CD8-positive, alpha-beta memory T cell (primary cell): ENCODE measurements at regions of chr3 and their contacts with region 1.

Region 1: GRCh38 chr3:183635431-183636220 is at the start of gene KLHL24:
- DNase-seq: peak; percentile 83 to 93 (median 87)
- H3K4me3 ChIP-seq: peak within 1 kb of the TSS; percentile 94
- H3K4me3 Mint-ChIP-seq: peak within 1 kb of the TSS; percentile 94 to 100 (median 95)
- H3K27ac ChIP-seq: peak within 1 kb of the TSS; percentile 96
- H3K27ac Mint-ChIP-seq: peak within 1 kb of the TSS; percentile 92 to 98 (median 97)
- H3K4me1 ChIP-seq: peaks cover 29% of the 10 kb centered on the region
- H3K4me1 Mint-ChIP-seq: peaks cover 23 to 40% (median 36%) of the 10 kb centered on the region in 3 donors
- H3K27me3 ChIP-seq: no peaks in the 10 kb centered on the region
- H3K27me3 Mint-ChIP-seq: no peaks in the 10 kb centered on the region
- total RNA-seq, gene KLHL24: 13.4 to 16.9 TPM

Region 2: GRCh38 chr3:183285828-183286457 is 349.7 kb before region 1 on chr3:
- CTCF ChIA-PET with region 1: no interaction called
- POLR2A ChIA-PET with region 1: no interaction called
- DNase-seq: peak; percentile 80 to 96 (median 89)
- H3K4me3 ChIP-seq: no peak overlapping the region
- H3K4me3 Mint-ChIP-seq: peak overlapping the region; percentile 24 to 83 (median 60)
- H3K27ac ChIP-seq: peak overlapping the region; percentile 49
- H3K27ac Mint-ChIP-seq: peak overlapping the region; percentile 93 to 98 (median 98)
- H3K4me1 ChIP-seq: peaks cover 16% of the 10 kb centered on the region
- H3K4me1 Mint-ChIP-seq: peaks cover 25 to 27% (median 27%) of the 10 kb centered on the region in 3 donors
- H3K27me3 ChIP-seq: no peaks in the 10 kb centered on the region
- H3K27me3 Mint-ChIP-seq: peaks cover 0 to 3% of the 10 kb centered on the region in 2 donors

Region 3: DNA sequence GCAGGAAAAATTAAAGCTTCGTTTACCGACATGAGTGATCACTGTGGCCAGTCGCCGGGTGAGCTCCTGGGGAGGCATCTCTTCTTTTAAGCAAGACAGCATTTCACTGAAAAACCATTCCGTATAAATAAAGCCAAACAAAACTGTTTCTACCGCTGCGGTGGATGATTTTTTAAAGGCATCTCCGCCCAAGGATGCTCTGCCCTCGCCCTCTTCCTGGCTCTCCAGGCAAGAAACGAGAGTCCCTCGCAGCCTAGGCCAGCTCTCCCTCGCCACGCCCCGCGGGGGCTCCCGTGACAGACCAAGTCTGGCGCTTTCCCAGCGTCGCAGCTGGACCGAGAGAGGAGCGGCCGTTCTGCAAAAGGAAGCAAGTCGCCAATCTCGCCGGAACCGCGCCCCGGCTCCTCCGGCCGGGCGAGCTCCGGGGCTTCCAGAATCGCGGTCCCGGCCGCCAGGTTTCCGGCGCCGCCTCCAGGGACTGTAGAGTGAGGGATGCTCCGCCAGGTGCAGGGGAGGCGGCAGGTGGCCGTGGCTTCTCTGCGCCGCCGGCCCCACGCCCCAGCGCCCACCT is 207.7 kb before region 1 on chr3:
- CTCF ChIA-PET with region 1: no interaction called
- POLR2A ChIA-PET with region 1: interaction called, 10 read pairs
- DNase-seq: peak in 3 of 5 donors; percentile 18 to 60 (median 24)
- H3K4me3 ChIP-seq: peak overlapping the region; percentile 67
- H3K4me3 Mint-ChIP-seq: peak overlapping the region; percentile 83 to 94 (median 90)
- H3K27ac ChIP-seq: peak overlapping the region; percentile 52
- H3K27ac Mint-ChIP-seq: peak overlapping the region in 4 of 8 donors; percentile 24 to 70 (median 45)
- H3K4me1 ChIP-seq: peaks cover 10% of the 10 kb centered on the region
- H3K4me1 Mint-ChIP-seq: peaks cover 23 to 34% (median 31%) of the 10 kb centered on the region in 3 donors
- H3K27me3 ChIP-seq: no peaks in the 10 kb centered on the region
- H3K27me3 Mint-ChIP-seq: peaks cover 4 to 9% of the 10 kb centered on the region in 2 donors

Region 4: DNA sequence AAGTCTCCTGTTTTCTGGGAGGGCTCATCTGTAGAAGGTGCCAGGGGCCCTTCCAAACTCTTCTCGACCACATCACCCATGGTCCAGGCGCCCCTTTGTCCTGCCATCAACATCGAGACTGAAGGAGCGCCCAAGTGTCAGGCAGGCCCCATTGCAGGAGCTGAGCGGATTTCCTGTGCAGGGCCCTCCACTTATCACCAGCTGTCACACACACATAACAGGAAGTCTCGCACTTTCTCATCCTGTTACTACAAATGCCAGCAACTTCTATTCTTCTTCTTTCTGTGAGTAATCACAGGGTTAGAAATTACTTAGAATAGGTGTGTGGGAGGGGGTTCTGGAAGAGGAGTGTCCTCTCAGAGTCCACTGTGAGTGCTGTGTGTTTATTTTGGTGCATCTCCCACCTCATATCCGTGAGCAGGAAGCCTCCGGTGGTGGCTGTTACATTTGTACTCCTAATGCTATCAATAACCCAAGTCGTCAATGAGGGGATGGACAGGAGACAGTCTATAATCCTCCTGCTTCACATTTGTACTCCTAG is 80.0 kb before region 1 on chr3 and contains the start of gene KLHL6:
- CTCF ChIA-PET with region 1: interaction called, 5 read pairs
- POLR2A ChIA-PET with region 1: interaction called, 12 read pairs
- DNase-seq: peak; percentile 51 to 79 (median 69)
- H3K4me3 ChIP-seq: peak within 1 kb of the TSS; percentile 69
- H3K4me3 Mint-ChIP-seq: peak within 1 kb of the TSS; percentile 93 to 99 (median 97)
- H3K27ac ChIP-seq: peak within 1 kb of the TSS; percentile 48
- H3K27ac Mint-ChIP-seq: peak within 1 kb of the TSS; percentile 90 to 100 (median 98)
- H3K4me1 ChIP-seq: peaks cover 34% of the 10 kb centered on the region
- H3K4me1 Mint-ChIP-seq: peaks cover 48 to 64% (median 53%) of the 10 kb centered on the region in 3 donors
- H3K27me3 ChIP-seq: no peaks in the 10 kb centered on the region
- H3K27me3 Mint-ChIP-seq: no peaks in the 10 kb centered on the region
- total RNA-seq, gene KLHL6: 31.0 to 31.3 TPM

Region 5: DNA sequence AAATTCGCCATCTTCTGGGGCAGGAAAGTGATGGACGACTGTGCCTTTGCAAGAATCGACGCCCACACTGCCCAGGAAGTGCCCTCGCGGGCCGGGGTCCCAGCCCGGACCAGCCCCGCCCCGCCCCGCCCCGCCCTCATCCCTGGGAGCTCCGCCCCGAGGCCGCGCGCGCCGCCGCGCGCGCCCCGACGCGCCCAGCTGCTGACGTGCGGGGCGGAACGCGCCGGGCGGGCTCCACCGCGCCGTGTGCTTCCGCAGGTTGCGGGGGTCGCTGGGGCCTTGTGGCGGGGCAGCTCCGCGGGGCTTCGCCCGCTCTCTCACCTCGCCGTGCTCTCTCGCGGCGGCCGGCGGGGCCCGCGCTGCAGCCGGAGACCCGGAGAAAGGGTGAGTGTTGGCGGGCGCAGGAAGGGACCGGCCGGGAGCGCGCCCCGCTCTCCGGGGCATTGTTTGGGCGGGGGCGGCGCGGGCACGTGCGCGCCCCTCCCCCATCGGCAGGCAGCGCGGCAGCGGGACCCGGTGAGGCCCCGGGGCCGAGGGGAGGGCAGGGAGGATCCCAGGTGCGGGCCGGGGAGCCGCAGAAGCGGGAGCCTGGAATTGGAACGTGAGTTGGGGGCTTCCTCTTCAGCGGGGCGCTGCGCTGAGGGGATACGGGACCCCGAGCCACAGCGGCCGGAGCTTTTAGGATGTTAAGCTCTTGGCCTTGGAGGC is 62.1 kb after region 1 on chr3 and contains the start of gene YEATS2:
- CTCF ChIA-PET with region 1: interaction called, 3 read pairs
- POLR2A ChIA-PET with region 1: interaction called, 39 read pairs
- DNase-seq: peak; percentile 48 to 78 (median 70)
- H3K4me3 ChIP-seq: peak within 1 kb of the TSS; percentile 85
- H3K4me3 Mint-ChIP-seq: peak within 1 kb of the TSS; percentile 96 to 99 (median 98)
- H3K27ac ChIP-seq: peak within 1 kb of the TSS; percentile 84
- H3K27ac Mint-ChIP-seq: peak within 1 kb of the TSS; percentile 74 to 96 (median 91)
- H3K4me1 ChIP-seq: peaks cover 18% of the 10 kb centered on the region
- H3K4me1 Mint-ChIP-seq: peaks cover 34 to 45% (median 42%) of the 10 kb centered on the region in 3 donors
- H3K27me3 ChIP-seq: no peaks in the 10 kb centered on the region
- H3K27me3 Mint-ChIP-seq: peaks cover 0 to 3% of the 10 kb centered on the region in 2 donors
- total RNA-seq, gene YEATS2: 30.5 to 31.6 TPM